Mammary epithelial cell (primary cell): ENCODE measurements at regions of chr4 and their contacts with region 1.

Region 1: DNA sequence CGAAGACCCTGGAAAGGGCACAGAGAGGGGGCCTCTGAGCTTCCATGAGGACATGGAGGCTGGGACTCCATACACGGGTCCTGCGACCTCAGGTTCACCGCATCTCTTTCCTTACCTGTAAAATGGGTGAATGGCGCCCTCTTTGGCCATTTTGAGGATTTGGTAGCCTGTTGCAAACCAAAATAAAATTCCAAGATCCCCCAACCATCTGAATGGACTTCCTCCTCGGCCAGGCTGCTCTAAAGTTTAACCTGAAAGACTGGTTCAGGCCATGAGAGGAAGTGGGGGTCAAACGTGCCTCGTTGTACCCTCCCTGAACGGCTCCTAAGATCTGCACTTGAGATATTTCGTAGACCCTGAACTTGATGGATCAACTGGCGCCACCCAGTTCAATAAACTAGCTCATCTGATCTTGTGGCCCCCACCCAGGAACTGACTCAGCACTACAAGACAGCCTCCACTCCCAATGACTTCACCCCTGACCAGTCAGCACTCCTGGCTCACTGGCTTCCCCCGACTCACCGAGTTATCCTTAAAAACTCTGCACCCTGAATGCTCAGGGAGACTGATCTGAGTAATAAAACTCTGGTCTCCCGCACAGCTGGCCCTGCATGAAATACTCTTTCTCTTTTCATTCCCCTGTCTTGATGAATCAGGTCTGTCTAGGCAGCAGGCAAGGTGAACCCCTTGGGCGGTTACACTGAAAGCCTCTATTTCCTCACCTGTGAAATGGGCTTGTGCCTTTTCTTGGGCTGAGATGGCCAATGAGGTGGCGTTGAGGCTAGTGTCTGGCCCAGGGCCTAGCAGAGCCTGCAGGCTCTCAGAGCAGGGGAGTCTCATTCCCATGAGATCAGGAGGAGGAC is 32.9 kb upstream of the GPR78 start:
- DNase-seq: peak; percentile 82
- H3K4me3 ChIP-seq: no peak overlapping the region
- H3K27ac ChIP-seq: no peak overlapping the region
- H3K4me1 ChIP-seq: peaks cover 10% of the 10 kb centered on the region
- H3K27me3 ChIP-seq: no peaks in the 10 kb centered on the region
- CTCF ChIP-seq: peak; percentile 28 to 46

Region 2: GRCh38 chr4:8451440-8452197 is 95.7 kb before region 1 on chr4:
- CTCF ChIA-PET with region 1: no interaction called
- dilution Hi-C with region 1: loop called (anchors 5 kb)
- in situ Hi-C with region 1: no loop called
- intact Hi-C with region 1: no loop called
- DNase-seq: peak; percentile 75
- H3K4me3 ChIP-seq: no peak overlapping the region
- H3K27ac ChIP-seq: peak overlapping the region; percentile 45
- H3K4me1 ChIP-seq: no peaks in the 10 kb centered on the region
- H3K27me3 ChIP-seq: no peaks in the 10 kb centered on the region
- CTCF ChIP-seq: no peak

Region 3: GRCh38 chr4:8468746-8469535 is 78.4 kb before region 1 on chr4:
- CTCF ChIA-PET with region 1: no interaction called
- dilution Hi-C with region 1: no loop called
- in situ Hi-C with region 1: loop called in 1 of 2 experiments (anchors 10 kb)
- intact Hi-C with region 1: loop called (anchors 1 kb)
- DNase-seq: peak; percentile 39
- H3K4me3 ChIP-seq: no peak overlapping the region
- H3K27ac ChIP-seq: no peak overlapping the region
- H3K4me1 ChIP-seq: no peaks in the 10 kb centered on the region
- H3K27me3 ChIP-seq: no peaks in the 10 kb centered on the region
- CTCF ChIP-seq: peak; percentile 95 to 98

Region 4: GRCh38 chr4:8504279-8505007 is 42.9 kb before region 1 on chr4:
- CTCF ChIA-PET with region 1: no interaction called
- dilution Hi-C with region 1: loop called (anchors 5 kb)
- in situ Hi-C with region 1: no loop called
- intact Hi-C with region 1: no loop called
- DNase-seq: no peak
- H3K4me3 ChIP-seq: no peak overlapping the region
- H3K27ac ChIP-seq: no peak overlapping the region
- H3K4me1 ChIP-seq: peaks cover 5% of the 10 kb centered on the region
- H3K27me3 ChIP-seq: no peaks in the 10 kb centered on the region
- CTCF ChIP-seq: no peak